GM12878 (cell line): ENCODE measurements at regions of chr1 and their contacts with region 1.

Region 1: DNA sequence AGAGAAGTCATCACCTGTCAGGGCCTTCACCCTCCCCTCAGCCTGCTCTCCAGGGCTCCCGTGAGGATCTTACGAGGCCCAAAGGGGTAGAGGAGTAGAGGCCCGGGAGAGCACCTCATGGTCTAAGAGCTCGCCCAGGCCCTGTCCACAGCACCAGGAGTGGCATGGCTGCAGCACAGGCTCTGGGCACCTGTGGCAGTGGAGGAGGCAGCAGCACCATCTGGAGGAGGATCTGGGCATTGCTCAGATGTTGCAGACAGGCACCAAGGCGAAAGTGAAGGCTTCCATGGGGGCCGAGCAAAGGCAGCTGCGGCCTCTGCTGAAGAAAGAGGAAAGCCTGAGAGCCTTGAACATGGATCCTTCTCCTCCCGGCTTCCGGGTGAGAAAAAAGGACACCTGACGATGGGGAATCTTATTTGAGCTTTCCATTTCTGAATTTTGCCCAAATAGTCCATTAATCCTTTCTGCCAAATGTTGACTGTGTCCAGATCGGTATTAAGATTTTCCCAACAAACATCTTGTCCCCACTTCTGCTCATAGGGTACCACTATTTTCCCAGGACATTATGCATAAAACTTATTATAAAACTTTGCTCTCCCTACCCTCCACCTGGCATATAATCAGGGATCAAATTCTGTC is 604.7 kb downstream of the PTPRC start:
- DNase-seq: peak; percentile 67
- ATAC-seq: peak; percentile 100
- H3K4me3 ChIP-seq: no peak overlapping the region
- H3K27ac ChIP-seq: no peak overlapping the region
- H3K4me1 ChIP-seq: peaks cover 11% of the 10 kb centered on the region
- H3K27me3 ChIP-seq: no peaks in the 10 kb centered on the region
- CTCF ChIP-seq: peak; percentile 91 to 94 (median 93)
- EP300 ChIP-seq: no peak
- POLR2A ChIP-seq: no peak
- RAD21 ChIP-seq: peak; percentile 96

Region 2: DNA sequence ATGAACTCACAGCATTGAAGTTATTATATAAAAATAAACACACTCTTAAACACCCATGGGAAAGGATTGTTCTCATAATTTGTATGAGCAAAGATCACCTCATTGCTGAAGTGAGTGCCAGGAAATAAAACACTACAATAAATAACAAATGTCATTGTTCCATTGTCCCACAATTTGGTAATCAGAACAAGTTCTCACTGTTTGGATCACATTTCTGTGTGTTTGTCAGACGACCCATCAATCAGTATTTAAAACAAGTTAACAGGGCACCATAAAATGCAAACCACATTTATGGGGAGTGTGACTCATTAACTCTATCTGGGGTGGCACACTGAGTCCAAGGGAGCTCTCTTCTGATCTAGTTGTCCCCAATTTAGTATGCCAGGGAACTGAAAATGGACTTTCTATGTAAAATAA is 480.2 kb before region 1 on chr1:
- CTCF ChIA-PET with region 1: interaction called, 15 read pairs
- POLR2A ChIA-PET with region 1: no interaction called
- RAD21 ChIA-PET with region 1: interaction called, 6 read pairs
- SMC1A ChIA-PET with region 1: interaction called, 22 read pairs
- in situ Hi-C with region 1: no loop called
- intact Hi-C with region 1: no loop called
- DNase-seq: no peak
- ATAC-seq: peak; percentile 44
- H3K4me3 ChIP-seq: no peak overlapping the region
- H3K27ac ChIP-seq: no peak overlapping the region
- H3K4me1 ChIP-seq: no peaks in the 10 kb centered on the region
- H3K27me3 ChIP-seq: no peaks in the 10 kb centered on the region
- CTCF ChIP-seq: no peak
- EP300 ChIP-seq: no peak
- POLR2A ChIP-seq: no peak
- RAD21 ChIP-seq: no peak

Region 3: GRCh38 chr1:198880818-198881597 is 362.5 kb before region 1 on chr1:
- CTCF ChIA-PET with region 1: interaction called, 40 read pairs
- POLR2A ChIA-PET with region 1: no interaction called
- RAD21 ChIA-PET with region 1: interaction called, 23 read pairs
- SMC1A ChIA-PET with region 1: interaction called, 7 read pairs
- in situ Hi-C with region 1: no loop called
- intact Hi-C with region 1: loop called (anchors 10 kb)
- DNase-seq: no peak
- ATAC-seq: peak; percentile 60
- H3K4me3 ChIP-seq: no peak overlapping the region
- H3K27ac ChIP-seq: no peak overlapping the region
- H3K4me1 ChIP-seq: no peaks in the 10 kb centered on the region
- H3K27me3 ChIP-seq: no peaks in the 10 kb centered on the region
- CTCF ChIP-seq: no peak
- EP300 ChIP-seq: no peak
- POLR2A ChIP-seq: no peak
- RAD21 ChIP-seq: no peak

Region 4: DNA sequence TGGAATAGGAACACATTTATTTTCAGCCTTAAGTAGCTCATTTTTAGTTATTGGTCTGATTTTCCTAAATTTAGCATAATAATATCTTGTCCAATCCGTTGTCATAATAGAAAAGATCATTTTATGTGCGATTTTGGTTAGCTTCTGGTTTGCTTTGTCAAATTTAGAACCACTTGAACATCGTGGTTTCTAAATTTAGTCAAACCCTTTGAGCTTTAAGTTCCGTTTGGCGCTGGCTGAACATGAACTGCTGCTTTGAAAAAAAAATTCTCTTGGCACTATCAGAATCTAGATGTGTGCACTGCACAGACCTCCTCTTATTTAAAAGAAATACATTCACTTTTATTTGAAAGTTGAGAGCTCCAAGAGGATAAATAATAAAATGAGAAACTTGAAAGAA is 234.1 kb before region 1 on chr1:
- CTCF ChIA-PET with region 1: interaction called, 4 read pairs
- POLR2A ChIA-PET with region 1: no interaction called
- RAD21 ChIA-PET with region 1: interaction called, 6 read pairs
- SMC1A ChIA-PET with region 1: interaction called, 4 read pairs
- in situ Hi-C with region 1: no loop called
- intact Hi-C with region 1: loop called (anchors 5 kb)
- DNase-seq: peak; percentile 48
- ATAC-seq: peak; percentile 83
- H3K4me3 ChIP-seq: peak overlapping the region; percentile 13; the same call in 1 of the 2 replicates
- H3K27ac ChIP-seq: peak overlapping the region; percentile 8; the same call in 1 of the 2 replicates
- H3K4me1 ChIP-seq: peaks cover 11% of the 10 kb centered on the region
- H3K27me3 ChIP-seq: no peaks in the 10 kb centered on the region
- CTCF ChIP-seq: no peak
- EP300 ChIP-seq: peak; percentile 34 to 41; a peak in 1 of 4 replicates
- POLR2A ChIP-seq: no peak
- RAD21 ChIP-seq: peak; percentile 26; the same call in 1 of the 2 replicates

Region 5: DNA sequence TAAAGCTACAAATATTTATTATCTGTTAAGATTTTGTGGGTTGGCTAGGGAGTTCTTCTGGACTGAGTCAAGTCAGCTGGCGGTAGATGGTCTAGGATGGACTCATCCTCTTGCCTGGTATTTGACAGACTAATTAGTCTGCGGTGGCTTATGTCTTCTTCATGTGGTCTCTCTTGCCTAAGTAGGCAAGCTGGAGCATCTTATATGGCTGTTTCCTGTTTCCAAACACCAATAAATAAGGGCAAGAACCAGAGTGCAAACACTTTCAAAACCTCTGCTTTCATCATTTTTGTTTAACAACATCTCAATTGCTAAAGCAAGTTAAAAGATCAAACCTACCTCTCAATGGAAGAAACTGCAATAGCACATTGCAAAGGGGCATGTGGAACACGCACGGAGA is 119.9 kb before region 1 on chr1:
- CTCF ChIA-PET with region 1: interaction called, 7 read pairs
- POLR2A ChIA-PET with region 1: no interaction called
- RAD21 ChIA-PET with region 1: interaction called, 7 read pairs
- SMC1A ChIA-PET with region 1: interaction called, 12 read pairs
- in situ Hi-C with region 1: no loop called
- intact Hi-C with region 1: no loop called
- DNase-seq: no peak
- ATAC-seq: no peak
- H3K4me3 ChIP-seq: no peak overlapping the region
- H3K27ac ChIP-seq: no peak overlapping the region
- H3K4me1 ChIP-seq: no peaks in the 10 kb centered on the region
- H3K27me3 ChIP-seq: no peaks in the 10 kb centered on the region
- CTCF ChIP-seq: no peak
- EP300 ChIP-seq: no peak
- POLR2A ChIP-seq: no peak
- RAD21 ChIP-seq: no peak

Region 6: DNA sequence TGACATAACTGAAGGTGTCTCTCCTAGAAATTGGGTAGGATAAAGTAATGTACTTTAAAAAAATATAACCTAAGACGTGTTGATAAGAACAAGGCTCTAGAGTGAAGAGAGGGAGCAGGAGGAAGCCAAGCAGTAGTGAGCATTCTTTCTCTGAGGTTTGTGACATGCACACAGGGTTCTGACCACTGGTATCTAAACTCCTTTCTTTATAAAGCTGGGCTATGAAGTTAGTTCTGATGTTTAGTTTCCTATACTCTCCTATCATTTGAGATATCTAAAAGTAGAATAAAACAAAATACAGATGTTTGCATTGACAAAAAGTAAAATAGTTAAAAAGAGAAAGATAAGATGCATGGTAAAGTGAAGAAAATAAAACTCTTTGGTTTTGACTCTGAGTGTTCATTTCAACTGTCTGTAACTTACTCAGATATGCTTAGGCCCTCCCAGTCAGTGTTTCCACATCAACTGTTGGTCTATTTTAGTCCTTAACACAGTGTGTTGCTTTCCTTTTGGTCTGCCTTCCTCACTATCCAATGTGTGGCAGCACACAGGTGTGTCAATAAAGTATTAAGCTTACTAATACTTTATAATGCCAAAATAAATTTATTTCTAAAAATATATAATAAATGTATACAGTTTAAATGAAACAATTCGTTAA is 61.2 kb before region 1 on chr1:
- CTCF ChIA-PET with region 1: interaction called, 4 read pairs
- POLR2A ChIA-PET with region 1: no interaction called
- RAD21 ChIA-PET with region 1: no interaction called
- SMC1A ChIA-PET with region 1: interaction called, 35 read pairs
- in situ Hi-C with region 1: no loop called
- intact Hi-C with region 1: no loop called
- DNase-seq: no peak
- ATAC-seq: peak; percentile 87
- H3K4me3 ChIP-seq: no peak overlapping the region
- H3K27ac ChIP-seq: no peak overlapping the region
- H3K4me1 ChIP-seq: no peaks in the 10 kb centered on the region
- H3K27me3 ChIP-seq: no peaks in the 10 kb centered on the region
- CTCF ChIP-seq: no peak
- EP300 ChIP-seq: no peak
- POLR2A ChIP-seq: no peak
- RAD21 ChIP-seq: no peak

Region 7: DNA sequence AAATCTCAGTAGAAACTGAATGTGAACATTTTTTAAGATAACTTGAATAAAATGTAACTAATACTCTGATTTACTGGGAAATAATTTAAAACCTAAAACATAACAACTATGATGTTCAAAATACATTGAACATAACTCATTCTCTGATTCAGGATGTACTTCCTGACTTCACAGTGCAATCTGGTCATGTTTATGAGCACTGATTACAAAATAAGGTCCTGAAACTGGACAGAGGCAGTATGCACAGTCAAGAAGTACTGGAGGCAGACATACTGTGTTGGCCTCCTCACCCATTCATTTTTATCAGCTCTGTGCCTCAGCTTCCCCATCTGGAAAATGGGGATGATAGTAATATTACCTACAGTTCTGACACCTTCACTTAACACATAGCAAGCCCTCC is 46.6 kb after region 1 on chr1:
- CTCF ChIA-PET with region 1: no interaction called
- POLR2A ChIA-PET with region 1: no interaction called
- RAD21 ChIA-PET with region 1: no interaction called
- SMC1A ChIA-PET with region 1: no interaction called
- in situ Hi-C with region 1: no loop called
- intact Hi-C with region 1: no loop called
- DNase-seq: no peak
- ATAC-seq: no peak
- H3K4me3 ChIP-seq: no peak overlapping the region
- H3K27ac ChIP-seq: no peak overlapping the region
- H3K4me1 ChIP-seq: no peaks in the 10 kb centered on the region
- H3K27me3 ChIP-seq: no peaks in the 10 kb centered on the region
- CTCF ChIP-seq: no peak
- EP300 ChIP-seq: no peak
- POLR2A ChIP-seq: no peak
- RAD21 ChIP-seq: no peak